ENCODE measurements at regions of chr16 and their contacts with region 1.

Region 1: DNA sequence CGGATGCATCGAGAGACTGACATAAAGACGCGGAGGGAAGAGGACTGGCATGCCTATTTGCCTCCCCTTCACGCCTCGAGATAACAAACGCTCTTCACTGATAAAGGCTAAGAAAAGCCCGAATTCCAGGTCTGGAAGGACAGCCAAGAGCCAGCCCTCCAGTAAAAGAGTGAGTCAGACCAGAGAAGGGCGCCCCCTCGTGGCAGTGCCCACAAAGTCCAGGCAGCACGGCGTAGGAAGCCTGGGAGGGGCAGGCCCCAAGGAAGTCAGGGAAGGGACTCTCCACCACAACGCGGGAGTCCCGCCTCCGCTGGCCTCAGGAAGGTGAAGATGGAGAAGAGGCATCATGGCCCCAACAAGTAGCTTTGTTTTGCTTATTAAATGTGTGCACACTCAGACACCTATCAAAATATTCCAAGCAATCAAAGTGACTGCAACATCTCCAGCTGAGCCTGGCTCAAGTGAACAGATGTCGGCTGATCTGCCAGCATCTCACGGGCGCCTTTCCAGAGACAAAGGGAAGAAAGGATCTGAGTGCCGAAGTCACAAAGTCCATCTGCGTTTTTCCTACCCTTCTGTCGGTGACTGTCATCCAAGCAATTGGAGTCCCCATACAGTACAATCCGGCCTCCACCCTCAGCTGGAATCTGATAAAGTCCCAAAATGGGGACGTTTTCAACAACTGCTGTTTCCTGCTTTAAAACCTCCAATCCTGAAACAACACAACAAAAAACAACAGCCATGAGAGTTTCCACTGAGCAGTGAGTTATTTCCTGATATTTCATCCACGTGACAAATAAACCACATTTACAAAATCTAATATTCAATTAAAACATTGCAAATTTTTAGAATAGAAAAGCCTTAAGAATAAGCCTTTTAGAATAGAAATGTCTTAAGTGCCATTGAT is 20.4 kb upstream of the SLC38A8 start:
- DNase-seq: peak; percentile 63 to 73
- H3K4me3 ChIP-seq: no peak overlapping the region
- H3K27ac ChIP-seq: no peak overlapping the region
- H3K4me1 ChIP-seq: no peaks in the 10 kb centered on the region
- H3K27me3 ChIP-seq: no peaks in the 10 kb centered on the region
- CTCF ChIP-seq: peak; percentile 58 to 82 (median 67)
- POLR2A ChIP-seq: no peak

Region 2: DNA sequence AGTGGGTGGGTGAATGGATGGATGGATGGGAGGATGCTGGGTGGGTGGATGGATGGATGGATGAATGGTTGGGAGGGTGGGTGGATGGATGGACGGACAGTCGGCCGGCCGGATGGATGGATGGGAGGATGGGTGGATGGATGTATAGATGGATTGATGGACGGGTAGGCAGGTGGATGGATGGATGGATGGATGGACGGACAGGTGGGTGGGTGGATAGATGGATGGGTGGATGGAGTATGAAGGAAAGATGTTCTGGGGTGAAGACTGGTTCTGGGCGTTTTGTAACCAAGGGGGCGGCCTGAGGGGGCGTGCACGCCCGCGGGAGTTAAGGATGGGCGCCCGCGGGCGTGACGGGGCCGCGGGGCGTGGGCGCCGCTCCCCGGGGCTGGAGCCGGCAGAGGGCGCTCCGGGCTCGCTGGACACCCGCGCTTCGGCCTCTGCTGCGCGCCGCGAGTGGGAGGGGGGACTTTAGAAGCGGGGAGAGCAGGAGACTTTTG is 95.1 kb before region 1 on chr16 and contains the start of gene NECAB2:
- intact Hi-C with region 1: loop called (anchors 5 kb)
- DNase-seq: peak; percentile 38 to 44
- H3K4me3 ChIP-seq: peak within 1 kb of the TSS in 1 of 3 donors; percentile 21
- H3K27ac ChIP-seq: no peak within 1 kb of the TSS
- H3K4me1 ChIP-seq: peaks cover 0 to 4% of the 10 kb centered on the region in 2 donors
- H3K27me3 ChIP-seq: no peaks in the 10 kb centered on the region
- CTCF ChIP-seq: peak in 3 of 6 experiments; percentile 33 to 72 (median 47)
- POLR2A ChIP-seq: no peak
- total RNA-seq, gene NECAB2: 0.63 to 0.94 TPM in 2 of 4 donors, not detected in the others

Measured in thyroid gland (tissue), 4 donors.